ENCODE measurements at regions of chr2 and their contacts with region 1.

Region 1: GRCh38 chr2:68487773-68488355 is 20.5 kb downstream of the APLF start:
- DNase-seq: no peak
- H3K4me3 Mint-ChIP-seq: no peak overlapping the region
- H3K27ac Mint-ChIP-seq: no peak overlapping the region
- H3K4me1 Mint-ChIP-seq: peaks cover 2% of the 10 kb centered on the region
- H3K27me3 Mint-ChIP-seq: no peaks in the 10 kb centered on the region

Region 2: GRCh38 chr2:68062680-68063387 is 425.0 kb before region 1 on chr2 and contains the start of gene C1D:
- CTCF ChIA-PET with region 1: no interaction called
- intact Hi-C with region 1: no loop called
- DNase-seq: peak; percentile 96
- H3K4me3 Mint-ChIP-seq: peak within 1 kb of the TSS; percentile 89
- H3K27ac Mint-ChIP-seq: peak within 1 kb of the TSS; percentile 93
- H3K4me1 Mint-ChIP-seq: peaks cover 33% of the 10 kb centered on the region
- H3K27me3 Mint-ChIP-seq: no peaks in the 10 kb centered on the region
- total RNA-seq, gene C1D: 19.0 to 21.4 TPM

Region 3: DNA sequence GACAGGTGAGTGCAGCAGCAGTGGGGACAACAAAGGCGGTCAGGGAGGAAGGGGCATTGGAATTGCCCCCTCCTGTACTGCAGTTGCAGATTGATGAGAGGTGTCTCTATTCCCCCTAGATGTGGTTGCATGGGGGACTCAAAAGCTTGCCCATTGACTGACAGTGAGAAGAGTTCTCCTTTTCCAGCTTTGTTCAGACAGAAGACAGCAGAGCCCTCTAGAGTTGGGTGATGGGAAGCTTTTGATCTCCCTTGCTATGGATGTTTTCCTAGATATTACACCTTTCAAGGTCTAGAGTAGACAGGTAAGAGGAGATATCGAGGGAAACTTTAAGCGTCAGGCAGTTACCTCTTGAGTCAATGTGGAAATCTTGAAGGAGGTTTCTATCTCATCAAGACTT is 158.4 kb after region 1 on chr2:
- CTCF ChIA-PET with region 1: no interaction called
- intact Hi-C with region 1: loop called (anchors 1 kb)
- DNase-seq: no peak
- H3K4me3 Mint-ChIP-seq: no peak overlapping the region
- H3K27ac Mint-ChIP-seq: no peak overlapping the region
- H3K4me1 Mint-ChIP-seq: peaks cover 18% of the 10 kb centered on the region
- H3K27me3 Mint-ChIP-seq: peaks cover 59% of the 10 kb centered on the region

Measured in activated naive CD4-positive, alpha-beta T cell treated with anti-CD3 and anti-CD28 coated beads for 36 hours (primary cell).